ENCODE measurements at regions of chr16 and their contacts with region 1.

Region 1: DNA sequence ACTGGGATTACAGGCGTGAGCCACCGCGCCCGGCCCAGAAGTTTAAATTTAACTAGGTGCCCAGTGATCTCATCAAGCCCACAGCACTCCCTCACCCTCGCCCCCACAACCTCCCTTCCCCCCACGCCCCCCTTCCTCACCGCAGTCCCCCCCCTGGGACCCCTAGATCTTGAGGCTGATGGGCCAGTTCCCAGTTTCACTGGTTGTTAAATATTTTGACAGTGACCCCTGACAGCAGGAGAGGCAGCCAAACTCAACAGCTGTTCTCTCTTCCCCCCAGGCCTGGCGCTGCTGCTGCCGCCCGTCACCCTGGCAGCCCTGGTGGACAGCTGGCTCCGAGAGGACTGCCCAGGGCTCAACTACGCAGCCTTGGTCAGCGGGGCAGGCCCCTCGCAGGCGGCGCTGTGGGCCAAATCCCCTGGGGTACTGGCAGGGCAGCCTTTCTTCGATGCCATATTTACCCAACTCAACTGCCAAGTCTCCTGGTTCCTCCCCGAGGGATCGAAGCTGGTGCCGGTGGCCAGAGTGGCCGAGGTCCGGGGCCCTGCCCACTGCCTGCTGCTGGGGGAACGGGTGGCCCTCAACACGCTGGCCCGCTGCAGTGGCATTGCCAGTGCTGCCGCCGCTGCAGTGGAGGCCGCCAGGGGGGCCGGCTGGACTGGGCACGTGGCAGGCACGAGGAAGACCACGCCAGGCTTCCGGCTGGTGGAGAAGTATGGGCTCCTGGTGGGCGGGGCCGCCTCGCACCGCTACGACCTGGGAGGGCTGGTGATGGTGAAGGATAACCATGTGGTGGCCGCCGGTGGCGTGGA is 15.6 kb downstream of the QPRT start:
- DNase-seq: no peak
- ATAC-seq: no peak
- H3K4me3 Mint-ChIP-seq: no peak overlapping the region
- H3K27ac Mint-ChIP-seq: no peak overlapping the region
- H3K4me1 Mint-ChIP-seq: peaks cover 17% of the 10 kb centered on the region
- H3K27me3 Mint-ChIP-seq: no peaks in the 10 kb centered on the region
- CTCF ChIP-seq: no peak

Region 2: DNA sequence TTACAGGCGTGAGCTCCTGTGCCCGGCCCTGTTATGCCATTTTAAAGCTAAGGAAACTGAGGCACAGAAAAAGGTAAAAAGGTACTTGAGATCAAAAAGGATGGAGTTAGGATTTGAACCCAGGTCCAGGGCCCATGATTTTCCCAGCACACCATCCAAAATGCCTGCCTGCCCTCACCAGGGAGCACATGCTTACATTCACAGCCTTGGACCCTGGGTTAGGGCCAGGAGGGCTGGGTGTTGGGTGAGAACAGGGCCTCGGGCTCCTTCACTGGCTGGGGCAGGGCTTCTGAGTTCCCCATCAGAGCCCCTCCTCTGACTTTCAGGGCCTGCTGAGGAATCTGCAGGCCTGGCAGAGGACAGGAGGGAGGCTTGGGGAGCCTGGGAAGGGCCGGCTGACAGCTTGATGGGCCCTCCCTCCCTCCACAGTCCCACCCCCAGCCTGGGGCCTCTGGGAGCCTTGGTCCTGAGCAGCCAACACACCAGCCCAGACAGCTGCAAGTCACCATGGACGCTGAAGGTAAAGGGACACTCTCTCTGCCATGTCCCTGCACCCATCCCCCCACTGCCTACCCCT is 15.8 kb before region 1 on chr16 and contains the start of gene QPRT:
- CTCF ChIA-PET with region 1: interaction called, 23 read pairs
- POLR2A ChIA-PET with region 1: interaction called, 23 read pairs
- DNase-seq: peak; percentile 90
- ATAC-seq: peak; percentile 85
- H3K4me3 Mint-ChIP-seq: peak within 1 kb of the TSS; percentile 91
- H3K27ac Mint-ChIP-seq: peak within 1 kb of the TSS; percentile 100
- H3K4me1 Mint-ChIP-seq: peaks cover 40% of the 10 kb centered on the region
- H3K27me3 Mint-ChIP-seq: no peaks in the 10 kb centered on the region
- CTCF ChIP-seq: no peak
- total RNA-seq, gene QPRT: 138 to 187 TPM (median 182 TPM) in 3 replicates

Region 3: GRCh38 chr16:29995911-29996772 is 301.6 kb after region 1 on chr16 and contains the start of gene INO80E:
- CTCF ChIA-PET with region 1: no interaction called
- POLR2A ChIA-PET with region 1: no interaction called
- DNase-seq: peak; percentile 100
- ATAC-seq: peak; percentile 88
- H3K4me3 Mint-ChIP-seq: peak within 1 kb of the TSS; percentile 94
- H3K27ac Mint-ChIP-seq: peak within 1 kb of the TSS; percentile 97
- H3K4me1 Mint-ChIP-seq: peaks cover 20% of the 10 kb centered on the region
- H3K27me3 Mint-ChIP-seq: no peaks in the 10 kb centered on the region
- CTCF ChIP-seq: no peak
- total RNA-seq, gene INO80E: 87.6 to 101 TPM (median 92.4 TPM) in 3 replicates

Measured in WTC11 (cell line).